ENCODE measurements at regions of chr2 and their contacts with region 1.

Region 1: DNA sequence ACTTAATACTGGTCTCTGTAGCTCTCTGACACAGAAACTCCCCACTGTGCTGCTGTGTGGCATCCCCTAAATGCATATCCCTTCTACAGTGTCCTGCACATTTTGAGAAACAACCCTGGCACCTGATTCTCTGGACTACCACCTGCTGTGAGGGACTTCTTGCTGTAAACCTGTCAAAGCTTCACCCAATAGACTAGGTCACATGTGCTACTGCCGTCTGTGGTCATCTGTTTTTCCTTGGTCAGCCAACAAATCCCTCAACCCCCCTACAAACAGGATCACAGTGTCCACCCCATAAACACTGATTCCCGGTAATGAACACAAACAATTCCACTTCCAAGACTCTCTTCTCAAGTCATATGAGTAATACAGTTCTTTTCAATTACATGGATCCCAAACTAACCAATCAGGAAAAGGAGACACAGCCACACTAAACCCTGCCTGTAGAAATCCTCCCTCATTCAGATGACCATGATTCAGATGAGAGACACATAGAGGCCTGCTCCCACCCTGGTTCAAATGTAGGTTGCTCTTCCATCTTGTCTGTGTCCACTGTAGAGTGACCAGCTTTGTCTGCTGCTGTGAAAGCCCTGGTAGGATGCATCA is 1157.4 kb downstream of the RPIA start:
- DNase-seq: no peak
- ATAC-seq: no peak
- H3K4me3 ChIP-seq: no peak overlapping the region
- H3K27ac ChIP-seq: no peak overlapping the region
- H3K4me1 ChIP-seq: no peaks in the 10 kb centered on the region
- H3K27me3 ChIP-seq: peaks cover 0 to 4% of the 10 kb centered on the region in 2 experiments; a peak in 3 of 4 replicates
- CTCF ChIP-seq: no peak
- EP300 ChIP-seq: no peak
- POLR2A ChIP-seq: no peak
- RAD21 ChIP-seq: no peak

Region 2: DNA sequence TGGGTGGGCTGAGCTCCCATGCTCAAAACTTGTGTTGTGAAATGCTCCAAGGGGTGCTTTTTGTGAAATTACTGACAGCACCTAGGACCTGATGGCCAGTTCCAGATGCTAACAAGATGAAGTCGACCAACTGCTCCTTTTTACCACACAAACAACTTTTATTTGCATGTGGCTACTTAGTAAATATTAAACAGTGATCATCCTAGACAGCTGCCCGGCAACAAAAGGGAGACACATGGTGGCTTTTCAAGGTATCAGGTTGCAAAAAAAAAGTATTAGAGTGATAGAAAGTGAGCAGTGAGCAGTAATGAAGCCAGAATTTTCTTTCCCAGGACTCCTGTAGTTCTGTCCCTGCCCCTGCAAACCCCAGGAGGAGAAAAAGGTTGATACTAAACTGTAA is 1038.8 kb before region 1 on chr2:
- CTCF ChIA-PET with region 1: no interaction called
- POLR2A ChIA-PET with region 1: no interaction called
- RAD21 ChIA-PET with region 1: no interaction called
- SMC1A ChIA-PET with region 1: no interaction called
- in situ Hi-C with region 1: loop called (anchors 5 kb)
- intact Hi-C with region 1: no loop called
- DNase-seq: no peak
- ATAC-seq: no peak
- H3K4me3 ChIP-seq: no peak overlapping the region
- H3K27ac ChIP-seq: no peak overlapping the region
- H3K4me1 ChIP-seq: no peaks in the 10 kb centered on the region
- H3K27me3 ChIP-seq: no peaks in the 10 kb centered on the region; a peak in 1 of 4 replicates
- CTCF ChIP-seq: no peak
- EP300 ChIP-seq: no peak
- POLR2A ChIP-seq: no peak
- RAD21 ChIP-seq: no peak